ENCODE measurements at regions of chr4 and their contacts with region 1.

Region 1: GRCh38 chr4:101933906-101934305 is 143.4 kb downstream of the BANK1 start:
- DNase-seq: no peak
- ATAC-seq: no peak
- H3K4me3 ChIP-seq: no peak overlapping the region
- H3K4me3 Mint-ChIP-seq: no peak overlapping the region
- H3K27ac ChIP-seq: peak overlapping the region in 1 of 2 donors; percentile 37
- H3K27ac Mint-ChIP-seq: peak overlapping the region; percentile 75
- H3K4me1 ChIP-seq: no peaks in the 10 kb centered on the region
- H3K4me1 Mint-ChIP-seq: peaks cover 31% of the 10 kb centered on the region
- H3K27me3 ChIP-seq: no peaks in the 10 kb centered on the region
- H3K27me3 Mint-ChIP-seq: no peaks in the 10 kb centered on the region
- CTCF ChIP-seq: no peak

Region 2: DNA sequence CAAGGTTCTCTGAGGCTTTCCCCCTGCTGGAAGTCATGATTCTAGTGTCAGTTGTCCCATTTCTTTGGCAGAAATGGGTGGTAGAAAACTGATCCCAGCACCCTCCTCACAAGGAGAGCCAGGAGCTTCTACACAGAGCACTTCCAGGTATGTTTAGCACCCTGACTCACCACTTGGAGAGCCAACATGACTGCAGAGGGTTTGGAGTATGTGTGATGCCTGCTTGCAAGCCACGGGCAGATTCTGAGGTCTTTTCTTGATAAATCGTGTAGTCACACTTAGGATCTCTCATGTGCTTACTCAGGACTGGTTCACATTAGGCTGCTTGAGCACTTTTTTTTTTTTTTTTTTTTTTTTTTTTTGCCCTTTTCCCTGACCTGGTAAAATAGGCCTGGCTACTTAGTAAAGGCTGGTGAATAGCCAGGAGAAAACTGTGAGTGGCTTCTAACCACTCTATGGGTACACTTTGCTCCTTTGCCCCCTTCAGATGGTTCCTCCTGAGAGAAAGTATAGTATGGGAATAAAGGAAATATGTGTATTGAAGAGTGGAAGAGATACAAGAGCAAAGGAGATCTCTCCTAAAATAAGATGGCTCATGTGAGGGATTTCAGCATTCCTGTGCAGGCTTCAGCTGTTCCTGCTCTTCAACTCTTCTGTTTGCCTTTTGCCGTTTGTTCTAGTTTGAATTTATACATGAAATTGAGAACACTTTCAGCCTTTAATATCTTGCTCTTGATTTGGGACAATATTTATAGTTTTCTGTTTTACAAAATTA is 1519.7 kb before region 1 on chr4:
- CTCF ChIA-PET with region 1: no interaction called
- POLR2A ChIA-PET with region 1: no interaction called
- intact Hi-C with region 1: no loop called
- DNase-seq: no peak
- ATAC-seq: no peak
- H3K4me3 ChIP-seq: no peak overlapping the region
- H3K4me3 Mint-ChIP-seq: no peak overlapping the region
- H3K27ac ChIP-seq: no peak overlapping the region
- H3K27ac Mint-ChIP-seq: no peak overlapping the region
- H3K4me1 ChIP-seq: no peaks in the 10 kb centered on the region
- H3K4me1 Mint-ChIP-seq: no peaks in the 10 kb centered on the region
- H3K27me3 ChIP-seq: no peaks in the 10 kb centered on the region
- H3K27me3 Mint-ChIP-seq: peaks cover 10% of the 10 kb centered on the region
- CTCF ChIP-seq: no peak

Region 3: DNA sequence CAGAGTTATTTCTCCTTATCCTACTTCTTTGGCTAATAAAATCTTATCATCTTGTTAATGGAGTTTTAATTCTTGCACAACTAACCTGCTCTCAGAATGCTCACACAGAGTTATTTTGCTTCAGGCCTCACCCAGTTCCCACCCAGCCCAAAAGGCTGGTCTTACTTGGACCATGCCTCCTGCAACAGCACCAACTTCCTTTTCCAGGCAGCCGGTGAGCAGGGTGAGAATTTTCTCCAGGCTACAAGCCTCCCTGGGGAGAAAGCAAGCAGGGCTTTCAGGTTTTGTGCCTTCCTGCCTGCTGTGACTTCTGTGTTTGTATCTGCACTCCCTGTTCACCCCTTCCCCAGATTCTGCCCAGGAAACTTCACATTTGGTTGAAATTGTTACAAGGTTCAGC is 172.5 kb before region 1 on chr4:
- CTCF ChIA-PET with region 1: no interaction called
- POLR2A ChIA-PET with region 1: no interaction called
- intact Hi-C with region 1: no loop called
- DNase-seq: no peak
- ATAC-seq: no peak
- H3K4me3 ChIP-seq: no peak overlapping the region
- H3K4me3 Mint-ChIP-seq: peak overlapping the region; percentile 38
- H3K27ac ChIP-seq: no peak overlapping the region
- H3K27ac Mint-ChIP-seq: peak overlapping the region; percentile 16
- H3K4me1 ChIP-seq: peaks cover 3 to 4% of the 10 kb centered on the region in 2 donors
- H3K4me1 Mint-ChIP-seq: peaks cover 22% of the 10 kb centered on the region
- H3K27me3 ChIP-seq: no peaks in the 10 kb centered on the region
- H3K27me3 Mint-ChIP-seq: no peaks in the 10 kb centered on the region
- CTCF ChIP-seq: no peak

Region 4: DNA sequence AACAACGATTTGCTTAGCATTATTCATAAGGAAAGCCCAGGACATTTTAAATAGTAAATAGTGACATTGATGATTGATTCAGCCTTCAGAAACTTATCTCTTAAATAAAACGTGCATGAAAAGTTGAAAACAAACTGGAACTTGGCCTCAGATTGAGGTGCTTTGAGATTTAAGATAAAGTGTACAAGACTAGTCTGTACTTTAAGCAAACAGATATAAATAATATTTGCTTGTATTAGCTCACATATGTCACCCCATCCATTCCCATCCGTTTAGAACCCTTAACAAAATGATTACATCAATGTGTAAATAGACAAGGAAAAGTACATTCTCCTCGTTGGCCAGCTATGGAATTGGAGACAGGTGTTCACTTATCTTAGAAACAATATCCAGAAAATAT is 12.6 kb before region 1 on chr4:
- CTCF ChIA-PET with region 1: no interaction called
- POLR2A ChIA-PET with region 1: no interaction called
- intact Hi-C with region 1: loop called (anchors 2 kb)
- DNase-seq: no peak
- ATAC-seq: no peak
- H3K4me3 ChIP-seq: no peak overlapping the region
- H3K4me3 Mint-ChIP-seq: no peak overlapping the region
- H3K27ac ChIP-seq: no peak overlapping the region
- H3K27ac Mint-ChIP-seq: no peak overlapping the region
- H3K4me1 ChIP-seq: no peaks in the 10 kb centered on the region
- H3K4me1 Mint-ChIP-seq: peaks cover 31% of the 10 kb centered on the region
- H3K27me3 ChIP-seq: no peaks in the 10 kb centered on the region
- H3K27me3 Mint-ChIP-seq: no peaks in the 10 kb centered on the region
- CTCF ChIP-seq: no peak

Region 5: DNA sequence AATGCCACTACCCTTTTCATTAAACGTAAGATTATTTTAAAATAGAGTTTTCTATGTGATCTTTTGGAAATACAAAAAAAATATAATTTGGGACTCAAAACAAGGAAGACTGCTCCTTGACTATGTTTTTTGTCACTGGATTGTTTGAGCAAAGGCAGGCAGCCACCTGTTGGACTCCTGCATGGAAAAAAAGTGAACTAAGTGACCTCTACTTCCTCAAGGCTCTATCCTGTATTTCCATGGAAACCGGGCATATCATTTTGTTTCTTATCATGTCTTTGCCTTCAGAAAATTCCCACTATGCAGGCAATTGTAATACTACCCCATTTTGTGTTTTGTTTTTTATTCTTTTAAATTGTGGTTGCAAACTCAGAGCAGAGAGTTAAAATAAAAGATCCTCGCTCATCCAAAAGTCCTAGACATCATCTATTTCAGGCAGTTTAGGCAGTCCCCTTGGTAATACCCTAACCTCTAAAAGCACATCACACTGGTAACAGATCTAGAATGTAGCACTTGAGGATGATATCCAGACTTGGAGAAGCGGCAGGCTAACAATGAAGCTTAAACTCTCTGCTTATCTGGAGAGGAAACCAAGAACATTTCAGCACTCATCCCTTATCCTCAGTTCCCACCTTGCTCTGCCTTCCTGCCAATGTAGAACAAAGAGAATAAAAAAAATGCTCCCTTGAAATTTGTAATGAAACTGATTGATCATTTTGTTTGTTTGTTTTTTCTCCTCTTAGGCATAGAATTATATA is 22.3 kb after region 1 on chr4:
- CTCF ChIA-PET with region 1: no interaction called
- POLR2A ChIA-PET with region 1: no interaction called
- intact Hi-C with region 1: no loop called
- DNase-seq: no peak
- ATAC-seq: no peak
- H3K4me3 ChIP-seq: no peak overlapping the region
- H3K4me3 Mint-ChIP-seq: no peak overlapping the region
- H3K27ac ChIP-seq: peak overlapping the region in 1 of 2 donors; percentile 59
- H3K27ac Mint-ChIP-seq: peak overlapping the region; percentile 57
- H3K4me1 ChIP-seq: no peaks in the 10 kb centered on the region
- H3K4me1 Mint-ChIP-seq: peaks cover 41% of the 10 kb centered on the region
- H3K27me3 ChIP-seq: no peaks in the 10 kb centered on the region
- H3K27me3 Mint-ChIP-seq: no peaks in the 10 kb centered on the region
- CTCF ChIP-seq: no peak

Region 6: GRCh38 chr4:101967697-101968368 is 33.9 kb after region 1 on chr4:
- CTCF ChIA-PET with region 1: no interaction called
- POLR2A ChIA-PET with region 1: no interaction called
- intact Hi-C with region 1: loop called (anchors 5 kb)
- DNase-seq: no peak
- ATAC-seq: no peak
- H3K4me3 ChIP-seq: no peak overlapping the region
- H3K4me3 Mint-ChIP-seq: no peak overlapping the region
- H3K27ac ChIP-seq: peak overlapping the region in 1 of 2 donors; percentile 39
- H3K27ac Mint-ChIP-seq: peak overlapping the region; percentile 51
- H3K4me1 ChIP-seq: peaks cover 18 to 52% of the 10 kb centered on the region in 2 donors
- H3K4me1 Mint-ChIP-seq: peaks cover 65% of the 10 kb centered on the region
- H3K27me3 ChIP-seq: no peaks in the 10 kb centered on the region
- H3K27me3 Mint-ChIP-seq: no peaks in the 10 kb centered on the region
- CTCF ChIP-seq: no peak